ENCODE measurements at regions of chr16 and their contacts with region 1.

Region 1: GRCh38 chr16:89958068-89958467 is 9.5 kb downstream of the DEF8 start:
- DNase-seq: peak; percentile 20 to 45
- ATAC-seq: peak; percentile 32 to 80 (median 62)
- H3K4me3 ChIP-seq: peak overlapping the region in 2 of 10 donors; percentile 16 to 51
- H3K27ac ChIP-seq: peak overlapping the region in 2 of 10 donors; percentile 52 to 89
- H3K4me1 ChIP-seq: peaks cover 0 to 18% (median 0%) of the 10 kb centered on the region in 9 donors
- H3K27me3 ChIP-seq: no peaks in the 10 kb centered on the region
- CTCF ChIP-seq: no peak

Region 2: DNA sequence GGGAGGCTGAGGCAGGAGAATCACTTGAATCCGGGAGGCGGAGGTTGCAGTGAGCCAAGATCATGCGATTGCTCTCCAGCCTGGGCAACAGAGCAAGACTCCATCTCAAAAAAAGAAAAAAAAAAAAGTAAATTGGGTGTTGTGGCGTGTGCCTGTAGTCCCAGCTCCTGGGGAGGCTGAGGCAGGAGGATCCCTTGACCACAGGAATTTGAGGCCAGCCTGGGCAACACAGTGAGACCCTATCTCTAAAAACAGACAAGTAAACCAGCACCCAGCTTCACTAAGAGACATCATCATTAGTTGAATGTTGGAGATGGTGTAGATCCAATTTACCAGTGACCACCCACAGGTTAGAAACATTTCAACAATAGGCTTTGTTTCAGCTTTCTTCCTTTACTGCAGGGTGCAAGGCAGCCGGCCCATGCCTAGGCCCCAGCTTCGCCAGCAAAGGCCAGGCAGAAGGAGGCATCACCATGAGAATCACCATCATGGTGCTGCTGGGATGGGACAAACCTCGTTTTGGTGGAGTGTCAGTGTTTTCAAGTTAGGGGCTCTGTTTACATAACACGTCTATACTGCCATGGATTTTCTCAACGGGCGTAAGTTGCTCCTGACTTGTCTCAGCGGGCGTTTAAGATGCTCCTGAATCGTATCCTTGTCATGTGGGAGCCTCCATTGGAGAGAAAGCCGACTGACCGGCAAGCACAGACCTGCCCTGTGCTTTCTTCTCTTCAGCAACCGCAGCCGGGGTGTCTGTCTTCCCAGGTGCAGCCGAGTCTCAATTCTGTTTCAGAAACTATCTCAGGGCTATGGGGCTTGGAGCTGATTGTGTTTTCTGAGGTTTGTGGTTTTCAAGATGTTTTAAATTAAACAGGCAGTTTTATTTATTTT is 77.3 kb before region 1 on chr16:
- intact Hi-C with region 1: loop called in 1 of 10 experiments (anchors 10 kb)
- DNase-seq: no peak
- ATAC-seq: no peak
- H3K4me3 ChIP-seq: no peak overlapping the region
- H3K27ac ChIP-seq: no peak overlapping the region
- H3K4me1 ChIP-seq: peaks cover 0 to 10% (median 0%) of the 10 kb centered on the region in 9 donors
- H3K27me3 ChIP-seq: no peaks in the 10 kb centered on the region
- CTCF ChIP-seq: no peak